ENCODE measurements at regions of chr4 and their contacts with region 1.

Region 1: DNA sequence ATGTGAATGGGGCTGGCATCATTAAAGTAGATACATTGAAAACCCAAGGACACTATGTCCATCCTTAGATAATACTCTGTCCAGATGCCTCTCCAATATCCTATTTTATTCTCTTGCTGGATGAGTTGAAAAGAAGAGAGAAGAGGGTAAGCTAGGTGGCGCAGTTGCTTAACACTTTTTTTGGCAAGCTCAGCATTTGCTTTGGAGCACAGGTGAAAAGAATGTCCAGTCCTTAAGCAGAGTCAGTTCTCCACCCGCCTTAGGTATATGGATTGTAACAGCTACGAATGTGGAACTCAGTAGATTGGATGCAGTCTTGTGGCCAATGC is 208.4 kb downstream of the NWD2 start:
- DNase-seq: peak in 21 of 35 experiments; percentile 3 to 62 (median 21)
- ATAC-seq: peak; percentile 25 to 52 (median 37)
- H3K4me3 ChIP-seq: peak overlapping the region; percentile 56 to 65
- H3K4me3 Mint-ChIP-seq: peak overlapping the region; percentile 67 to 78 (median 69)
- H3K27ac ChIP-seq: no peak overlapping the region
- H3K27ac Mint-ChIP-seq: no peak overlapping the region
- H3K4me1 ChIP-seq: peaks cover 2 to 13% of the 10 kb centered on the region in 2 experiments
- H3K4me1 Mint-ChIP-seq: peaks cover 14 to 19% (median 15%) of the 10 kb centered on the region in 3 donors
- H3K27me3 ChIP-seq: peaks cover 12 to 23% of the 10 kb centered on the region in 2 experiments
- H3K27me3 Mint-ChIP-seq: peaks cover 46 to 56% of the 10 kb centered on the region in 2 donors

Region 2: DNA sequence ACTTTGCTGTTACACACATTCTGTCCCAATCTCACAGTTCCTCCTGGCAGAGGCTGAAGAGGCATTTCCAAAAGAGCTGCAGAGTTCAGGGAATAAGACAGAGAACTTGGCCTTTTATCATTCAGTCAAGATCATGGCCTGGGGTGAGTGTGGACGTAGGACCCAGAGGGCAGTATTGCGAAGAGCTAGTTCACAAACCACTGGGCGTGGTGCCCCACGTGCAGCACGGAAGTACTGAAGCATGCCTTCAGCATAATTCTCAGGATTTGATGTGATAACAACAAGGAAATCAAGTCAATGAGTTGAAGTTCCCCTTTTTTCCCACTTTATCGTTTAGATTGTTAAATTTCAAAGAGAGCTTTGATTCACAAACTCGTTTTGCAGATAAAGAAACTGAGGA is 115.6 kb after region 1 on chr4:
- CTCF ChIA-PET with region 1: interaction called, 11 to 16 read pairs
- POLR2A ChIA-PET with region 1: no interaction called
- DNase-seq: no peak
- ATAC-seq: no peak
- H3K4me3 ChIP-seq: no peak overlapping the region
- H3K4me3 Mint-ChIP-seq: no peak overlapping the region
- H3K27ac ChIP-seq: no peak overlapping the region
- H3K27ac Mint-ChIP-seq: no peak overlapping the region
- H3K4me1 ChIP-seq: no peaks in the 10 kb centered on the region
- H3K4me1 Mint-ChIP-seq: peaks cover 0 to 2% (median 2%) of the 10 kb centered on the region in 3 donors
- H3K27me3 ChIP-seq: no peaks in the 10 kb centered on the region
- H3K27me3 Mint-ChIP-seq: no peaks in the 10 kb centered on the region

Region 3: GRCh38 chr4:37686373-37687193 is 233.7 kb after region 1 on chr4 and contains the start of gene RELL1:
- CTCF ChIA-PET with region 1: no interaction called
- POLR2A ChIA-PET with region 1: no interaction called
- DNase-seq: peak; percentile 93 to 99 (median 96)
- ATAC-seq: peak; percentile 83 to 89 (median 84)
- H3K4me3 ChIP-seq: peak within 1 kb of the TSS; percentile 67 to 81
- H3K4me3 Mint-ChIP-seq: peak within 1 kb of the TSS; percentile 91 to 95 (median 95)
- H3K27ac ChIP-seq: peak within 1 kb of the TSS; percentile 82
- H3K27ac Mint-ChIP-seq: peak within 1 kb of the TSS; percentile 95 to 96
- H3K4me1 ChIP-seq: peaks cover 16 to 35% of the 10 kb centered on the region in 2 experiments
- H3K4me1 Mint-ChIP-seq: peaks cover 34 to 38% (median 36%) of the 10 kb centered on the region in 3 donors
- H3K27me3 ChIP-seq: no peaks in the 10 kb centered on the region
- H3K27me3 Mint-ChIP-seq: no peaks in the 10 kb centered on the region
- total RNA-seq, gene RELL1: 21.6 to 30.1 (median 25.9) TPM

Measured in T-cell (primary cell).